ENCODE measurements at regions of chr7 and their contacts with region 1.

Region 1: GRCh38 chr7:129054438-129055293 is at the start of gene TNPO3:
- DNase-seq: peak; percentile 94
- H3K4me3 Mint-ChIP-seq: peak within 1 kb of the TSS; percentile 97
- H3K27ac Mint-ChIP-seq: peak within 1 kb of the TSS; percentile 98
- H3K4me1 Mint-ChIP-seq: peaks cover 26% of the 10 kb centered on the region
- H3K27me3 Mint-ChIP-seq: peaks cover 7% of the 10 kb centered on the region
- total RNA-seq, gene TNPO3: 53.4 to 54.5 TPM

Region 2: GRCh38 chr7:128692623-128693270 is 361.9 kb before region 1 on chr7:
- CTCF ChIA-PET with region 1: no interaction called
- POLR2A ChIA-PET with region 1: no interaction called
- intact Hi-C with region 1: no loop called
- DNase-seq: no peak
- H3K4me3 Mint-ChIP-seq: no peak overlapping the region
- H3K27ac Mint-ChIP-seq: no peak overlapping the region
- H3K4me1 Mint-ChIP-seq: peaks cover 4% of the 10 kb centered on the region
- H3K27me3 Mint-ChIP-seq: peaks cover 21% of the 10 kb centered on the region

Region 3: GRCh38 chr7:128940494-128941322 is 114.0 kb before region 1 on chr7:
- CTCF ChIA-PET with region 1: interaction called, 3 read pairs
- POLR2A ChIA-PET with region 1: interaction called, 4 read pairs
- intact Hi-C with region 1: loop called (anchors 10 kb)
- DNase-seq: peak; percentile 51
- H3K4me3 Mint-ChIP-seq: peak overlapping the region; percentile 58
- H3K27ac Mint-ChIP-seq: peak overlapping the region; percentile 62
- H3K4me1 Mint-ChIP-seq: peaks cover 39% of the 10 kb centered on the region
- H3K27me3 Mint-ChIP-seq: peaks cover 6% of the 10 kb centered on the region

Region 4: DNA sequence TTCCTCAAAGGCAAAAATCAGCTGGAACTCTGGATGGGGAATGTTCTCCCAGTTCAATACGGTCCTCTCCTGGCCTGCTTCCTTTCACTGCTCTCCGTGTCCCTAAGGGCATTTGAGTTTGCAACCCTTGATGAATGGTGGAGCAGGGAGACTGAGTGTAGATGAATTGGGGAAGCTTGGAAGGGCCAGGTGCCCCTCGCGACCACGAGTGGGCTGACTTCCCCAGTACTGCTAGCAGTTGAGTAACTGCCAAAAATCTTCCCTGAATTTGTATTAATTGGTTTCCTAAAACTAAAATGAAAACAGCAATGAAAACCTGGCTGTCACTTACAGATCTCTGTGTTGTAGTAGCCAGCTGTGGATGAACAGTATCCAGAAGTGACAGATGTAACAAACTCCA is 103.4 kb before region 1 on chr7:
- CTCF ChIA-PET with region 1: no interaction called
- POLR2A ChIA-PET with region 1: no interaction called
- intact Hi-C with region 1: no loop called
- DNase-seq: no peak
- H3K4me3 Mint-ChIP-seq: no peak overlapping the region
- H3K27ac Mint-ChIP-seq: no peak overlapping the region
- H3K4me1 Mint-ChIP-seq: peaks cover 7% of the 10 kb centered on the region
- H3K27me3 Mint-ChIP-seq: no peaks in the 10 kb centered on the region

Region 5: GRCh38 chr7:128993419-128993818 is 61.2 kb before region 1 on chr7:
- CTCF ChIA-PET with region 1: no interaction called
- POLR2A ChIA-PET with region 1: no interaction called
- intact Hi-C with region 1: no loop called
- DNase-seq: no peak
- H3K4me3 Mint-ChIP-seq: no peak overlapping the region
- H3K27ac Mint-ChIP-seq: no peak overlapping the region
- H3K4me1 Mint-ChIP-seq: no peaks in the 10 kb centered on the region
- H3K27me3 Mint-ChIP-seq: no peaks in the 10 kb centered on the region

Region 6: DNA sequence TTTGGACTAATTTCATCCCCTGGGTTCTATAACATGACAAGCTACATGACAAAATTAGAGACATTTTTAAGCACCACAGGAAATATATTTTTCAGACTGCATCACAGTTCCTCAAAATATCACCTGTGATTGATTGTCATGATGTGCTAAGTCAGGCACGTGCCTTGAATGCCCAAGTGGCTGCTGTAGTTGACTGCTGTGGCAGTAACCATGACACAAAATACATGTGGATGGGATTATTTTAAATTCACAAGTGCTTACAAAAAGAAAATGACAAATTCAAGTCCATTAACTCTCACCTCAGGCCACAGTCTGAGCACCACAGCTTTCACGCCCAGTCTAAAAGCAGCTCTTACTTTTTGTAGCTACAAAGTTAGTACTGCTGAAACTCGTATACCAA is 45.2 kb before region 1 on chr7:
- CTCF ChIA-PET with region 1: interaction called, 3 read pairs
- POLR2A ChIA-PET with region 1: interaction called, 3 read pairs
- intact Hi-C with region 1: loop called (anchors 1 kb)
- DNase-seq: peak; percentile 11
- H3K4me3 Mint-ChIP-seq: no peak overlapping the region
- H3K27ac Mint-ChIP-seq: no peak overlapping the region
- H3K4me1 Mint-ChIP-seq: peaks cover 46% of the 10 kb centered on the region
- H3K27me3 Mint-ChIP-seq: no peaks in the 10 kb centered on the region

Region 7: DNA sequence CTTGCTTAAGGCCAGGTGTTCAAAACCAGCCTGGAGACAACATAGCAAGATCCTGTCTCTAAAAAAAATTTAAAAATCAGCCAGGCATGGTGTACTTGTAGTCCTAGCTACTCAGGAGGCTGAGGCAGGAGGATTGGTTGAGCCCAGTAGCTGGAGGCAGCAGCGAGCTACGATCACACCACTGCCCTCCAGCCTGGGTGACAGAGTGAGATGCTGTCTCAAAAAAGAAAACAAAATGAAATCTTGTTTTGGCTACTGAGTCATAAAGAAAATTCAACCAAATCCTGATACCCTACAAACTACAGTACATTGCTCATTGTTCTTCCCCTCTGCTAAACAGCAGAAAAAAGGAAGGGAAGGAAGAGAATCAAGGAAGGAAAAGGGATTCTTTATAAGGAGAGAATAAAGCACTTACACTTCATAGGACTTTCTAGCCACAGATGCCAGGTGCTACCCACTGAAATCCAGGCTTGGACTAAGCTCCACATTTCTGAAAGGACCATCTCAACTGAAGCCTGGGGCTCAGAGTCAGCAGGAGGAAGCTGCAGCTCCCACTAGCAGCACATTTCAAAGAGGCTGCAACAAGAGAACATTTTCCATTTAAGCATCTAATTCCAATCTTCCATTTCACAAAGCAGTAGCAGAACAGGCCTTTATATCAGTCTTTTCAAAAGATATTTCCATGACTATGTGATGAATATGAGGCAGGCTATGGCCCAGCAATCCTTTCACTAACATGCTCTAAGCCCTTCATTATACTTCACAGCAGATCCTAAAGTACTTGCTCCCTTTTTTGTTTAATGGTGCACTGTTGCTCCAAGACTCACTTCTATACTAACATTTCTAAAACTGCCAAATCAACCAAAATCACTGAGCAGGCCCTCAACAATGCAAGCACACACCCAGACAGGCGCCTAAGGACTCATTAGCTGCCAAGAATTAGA is 13.3 kb before region 1 on chr7:
- CTCF ChIA-PET with region 1: no interaction called
- POLR2A ChIA-PET with region 1: interaction called, 16 read pairs
- intact Hi-C with region 1: loop called (anchors 1 kb)
- DNase-seq: peak; percentile 45
- H3K4me3 Mint-ChIP-seq: no peak overlapping the region
- H3K27ac Mint-ChIP-seq: no peak overlapping the region
- H3K4me1 Mint-ChIP-seq: peaks cover 64% of the 10 kb centered on the region
- H3K27me3 Mint-ChIP-seq: no peaks in the 10 kb centered on the region

Region 8: DNA sequence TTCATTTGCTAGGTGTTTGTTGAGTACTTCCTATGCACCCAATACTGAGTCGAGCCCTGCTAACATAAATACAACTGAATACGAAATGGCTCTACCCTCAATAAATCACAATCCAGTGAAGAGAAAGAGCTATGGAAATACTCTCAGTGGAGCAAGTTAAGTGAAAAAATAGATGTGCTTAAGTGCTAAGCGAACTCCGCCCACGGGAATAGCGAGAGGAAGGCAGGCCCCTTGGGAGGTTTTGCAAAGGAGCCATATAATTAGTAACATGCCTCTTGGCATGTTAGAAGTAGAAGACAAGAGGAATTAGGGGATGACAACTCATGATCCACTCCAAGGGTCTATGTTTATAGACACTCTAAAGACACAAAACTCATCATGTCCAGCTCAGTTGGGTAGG is 47.1 kb after region 1 on chr7:
- CTCF ChIA-PET with region 1: no interaction called
- POLR2A ChIA-PET with region 1: no interaction called
- intact Hi-C with region 1: no loop called
- DNase-seq: no peak
- H3K4me3 Mint-ChIP-seq: no peak overlapping the region
- H3K27ac Mint-ChIP-seq: no peak overlapping the region
- H3K4me1 Mint-ChIP-seq: no peaks in the 10 kb centered on the region
- H3K27me3 Mint-ChIP-seq: no peaks in the 10 kb centered on the region

Measured in activated CD4-positive, alpha-beta memory T cell treated with anti-CD3 and anti-CD28 coated beads for 36 hours (primary cell).